Endothelial cell of umbilical vein (primary cell): ENCODE measurements at regions of chr5 and their contacts with region 1.

Region 1: DNA sequence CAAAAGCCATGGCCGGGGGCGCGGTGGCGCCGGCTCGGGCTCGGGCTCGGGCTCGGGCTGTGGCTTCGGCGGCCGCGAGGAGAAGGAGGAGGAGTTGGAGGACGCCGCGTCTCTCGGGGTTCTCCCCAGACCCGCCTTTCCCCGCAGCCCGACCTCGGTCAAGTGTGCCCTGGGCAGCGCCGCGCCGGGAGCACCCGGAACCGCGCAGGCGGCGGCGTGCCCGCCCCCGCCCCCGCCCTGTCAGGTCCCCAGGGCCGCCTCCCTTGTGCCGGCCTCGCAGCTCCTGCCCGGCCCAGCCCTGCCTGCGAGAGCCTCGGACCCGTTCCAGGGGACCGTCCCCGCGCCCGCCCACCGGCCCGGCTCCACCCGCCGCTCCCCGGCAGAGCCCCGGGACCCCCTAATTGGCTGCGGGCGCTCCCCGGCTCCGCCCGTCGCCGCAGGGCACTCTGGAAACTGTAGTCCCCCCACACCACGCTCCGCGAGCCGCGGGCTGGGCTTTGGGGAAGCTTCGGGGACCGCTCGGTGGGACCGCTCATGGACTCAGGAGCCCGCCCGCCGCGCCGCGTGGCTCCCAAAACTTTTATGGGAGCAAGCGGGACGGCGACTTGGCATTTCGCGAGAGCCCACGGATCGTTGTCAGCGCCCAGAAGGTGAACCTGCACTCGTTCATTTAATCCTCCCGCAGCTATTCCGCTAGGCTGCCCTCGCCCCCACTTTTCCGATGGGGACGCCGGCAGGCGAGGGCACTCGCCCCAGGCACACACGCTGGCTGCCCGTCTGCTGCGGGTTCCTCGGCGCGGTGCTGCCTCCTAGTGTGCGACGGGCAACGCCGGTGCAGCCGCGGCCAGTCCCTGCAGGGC is at the start of gene STK10:
- DNase-seq: peak; percentile 91
- H3K4me3 ChIP-seq: peak within 1 kb of the TSS; percentile 69 to 89 (median 74)
- H3K27ac ChIP-seq: peak within 1 kb of the TSS; percentile 74
- H3K4me1 ChIP-seq: peaks cover 16% of the 10 kb centered on the region
- H3K27me3 ChIP-seq: peaks cover 0 to 2% of the 10 kb centered on the region in 2 experiments
- CTCF ChIP-seq: peak; percentile 95 to 96
- POLR2A ChIP-seq: peak; percentile 52
- total RNA-seq, gene STK10: 47.2 and 57.9 TPM in 2 replicates

Region 2: GRCh38 chr5:171580502-171581265 is 607.6 kb before region 1 on chr5:
- CTCF ChIA-PET with region 1: no interaction called
- POLR2A ChIA-PET with region 1: no interaction called
- dilution Hi-C with region 1: no loop called
- intact Hi-C with region 1: no loop called
- DNase-seq: no peak
- H3K4me3 ChIP-seq: no peak overlapping the region
- H3K27ac ChIP-seq: no peak overlapping the region
- H3K4me1 ChIP-seq: no peaks in the 10 kb centered on the region
- H3K27me3 ChIP-seq: peaks cover 3 to 5% of the 10 kb centered on the region in 2 experiments
- CTCF ChIP-seq: no peak
- POLR2A ChIP-seq: no peak

Region 3: GRCh38 chr5:171614971-171615653 is 573.2 kb before region 1 on chr5:
- CTCF ChIA-PET with region 1: no interaction called
- POLR2A ChIA-PET with region 1: no interaction called
- dilution Hi-C with region 1: no loop called
- intact Hi-C with region 1: no loop called
- DNase-seq: no peak
- H3K4me3 ChIP-seq: no peak overlapping the region
- H3K27ac ChIP-seq: no peak overlapping the region
- H3K4me1 ChIP-seq: no peaks in the 10 kb centered on the region
- H3K27me3 ChIP-seq: peaks cover 2 to 7% of the 10 kb centered on the region in 2 experiments
- CTCF ChIP-seq: no peak
- POLR2A ChIP-seq: no peak

Region 4: GRCh38 chr5:171907725-171908343 is 280.4 kb before region 1 on chr5:
- CTCF ChIA-PET with region 1: interaction called, 50 read pairs
- POLR2A ChIA-PET with region 1: no interaction called
- dilution Hi-C with region 1: no loop called
- intact Hi-C with region 1: loop called (anchors 1 kb)
- DNase-seq: peak; percentile 65
- H3K4me3 ChIP-seq: no peak overlapping the region
- H3K27ac ChIP-seq: no peak overlapping the region
- H3K4me1 ChIP-seq: no peaks in the 10 kb centered on the region
- H3K27me3 ChIP-seq: no peaks in the 10 kb centered on the region
- CTCF ChIP-seq: peak; percentile 52 to 58
- POLR2A ChIP-seq: no peak

Region 5: GRCh38 chr5:172052450-172053236 is 135.6 kb before region 1 on chr5:
- CTCF ChIA-PET with region 1: interaction called, 6 read pairs
- POLR2A ChIA-PET with region 1: no interaction called
- dilution Hi-C with region 1: no loop called
- intact Hi-C with region 1: loop called (anchors 2 kb)
- DNase-seq: peak; percentile 46
- H3K4me3 ChIP-seq: no peak overlapping the region
- H3K27ac ChIP-seq: no peak overlapping the region
- H3K4me1 ChIP-seq: peaks cover 16% of the 10 kb centered on the region
- H3K27me3 ChIP-seq: no peaks in the 10 kb centered on the region
- CTCF ChIP-seq: no peak
- POLR2A ChIP-seq: no peak

Region 6: GRCh38 chr5:172114875-172115422 is 73.3 kb before region 1 on chr5:
- CTCF ChIA-PET with region 1: interaction called, 19 read pairs
- POLR2A ChIA-PET with region 1: no interaction called
- dilution Hi-C with region 1: no loop called
- intact Hi-C with region 1: no loop called
- DNase-seq: no peak
- H3K4me3 ChIP-seq: no peak overlapping the region
- H3K27ac ChIP-seq: no peak overlapping the region
- H3K4me1 ChIP-seq: peaks cover 16% of the 10 kb centered on the region
- H3K27me3 ChIP-seq: no peaks in the 10 kb centered on the region
- CTCF ChIP-seq: no peak
- POLR2A ChIP-seq: no peak

Region 7: DNA sequence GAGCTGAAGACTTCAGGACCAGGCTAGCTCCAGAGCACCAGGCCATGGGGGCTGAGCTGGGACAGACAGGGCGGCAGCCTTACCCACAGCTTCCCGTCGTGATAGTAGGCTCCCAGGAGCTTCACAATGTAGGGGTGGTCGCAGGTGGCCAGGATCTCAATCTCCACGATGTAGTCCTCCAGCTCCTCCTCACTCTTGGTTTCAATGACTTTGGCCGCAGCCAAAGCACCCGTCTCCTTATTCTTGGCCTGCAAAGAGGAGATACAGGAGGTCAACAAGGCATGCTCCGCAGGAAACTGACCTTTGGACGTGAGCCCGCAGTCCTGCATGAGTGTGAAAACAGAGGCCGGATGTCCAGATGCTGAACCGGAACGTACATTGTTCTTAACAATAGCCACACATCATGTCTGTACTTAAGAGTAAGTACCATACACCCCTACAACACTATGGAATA is 31.7 kb before region 1 on chr5:
- CTCF ChIA-PET with region 1: interaction called, 30 read pairs
- POLR2A ChIA-PET with region 1: interaction called, 7 read pairs
- dilution Hi-C with region 1: no loop called
- intact Hi-C with region 1: loop called (anchors 1 kb)
- DNase-seq: peak; percentile 98
- H3K4me3 ChIP-seq: no peak overlapping the region
- H3K27ac ChIP-seq: peak overlapping the region; percentile 75
- H3K4me1 ChIP-seq: peaks cover 15% of the 10 kb centered on the region
- H3K27me3 ChIP-seq: no peaks in the 10 kb centered on the region
- CTCF ChIP-seq: no peak
- POLR2A ChIP-seq: peak; percentile 25

Region 8: DNA sequence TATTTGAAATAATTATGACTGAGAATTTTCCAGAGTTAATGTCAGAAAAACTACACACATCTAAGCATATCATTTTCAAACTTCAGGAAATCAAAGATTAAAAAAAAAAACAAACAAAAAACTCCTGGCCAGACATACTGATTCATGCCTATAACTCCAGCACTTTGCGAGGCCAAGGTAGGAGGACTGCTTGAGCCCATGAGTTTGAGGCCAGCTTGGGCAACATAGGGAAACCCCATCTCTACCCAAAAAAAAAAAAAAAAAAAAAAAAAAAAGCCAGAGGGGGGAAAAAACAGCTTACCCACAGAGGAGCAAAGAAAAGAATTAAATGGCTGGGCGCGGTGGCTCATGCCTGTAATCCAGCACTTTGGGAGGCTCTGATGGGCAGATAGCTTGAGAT is 28.1 kb after region 1 on chr5:
- CTCF ChIA-PET with region 1: no interaction called
- POLR2A ChIA-PET with region 1: interaction called, 11 read pairs
- dilution Hi-C with region 1: no loop called
- intact Hi-C with region 1: no loop called
- DNase-seq: no peak
- H3K4me3 ChIP-seq: no peak overlapping the region
- H3K27ac ChIP-seq: no peak overlapping the region
- H3K4me1 ChIP-seq: no peaks in the 10 kb centered on the region
- H3K27me3 ChIP-seq: no peaks in the 10 kb centered on the region
- CTCF ChIP-seq: no peak
- POLR2A ChIP-seq: no peak

Region 9: DNA sequence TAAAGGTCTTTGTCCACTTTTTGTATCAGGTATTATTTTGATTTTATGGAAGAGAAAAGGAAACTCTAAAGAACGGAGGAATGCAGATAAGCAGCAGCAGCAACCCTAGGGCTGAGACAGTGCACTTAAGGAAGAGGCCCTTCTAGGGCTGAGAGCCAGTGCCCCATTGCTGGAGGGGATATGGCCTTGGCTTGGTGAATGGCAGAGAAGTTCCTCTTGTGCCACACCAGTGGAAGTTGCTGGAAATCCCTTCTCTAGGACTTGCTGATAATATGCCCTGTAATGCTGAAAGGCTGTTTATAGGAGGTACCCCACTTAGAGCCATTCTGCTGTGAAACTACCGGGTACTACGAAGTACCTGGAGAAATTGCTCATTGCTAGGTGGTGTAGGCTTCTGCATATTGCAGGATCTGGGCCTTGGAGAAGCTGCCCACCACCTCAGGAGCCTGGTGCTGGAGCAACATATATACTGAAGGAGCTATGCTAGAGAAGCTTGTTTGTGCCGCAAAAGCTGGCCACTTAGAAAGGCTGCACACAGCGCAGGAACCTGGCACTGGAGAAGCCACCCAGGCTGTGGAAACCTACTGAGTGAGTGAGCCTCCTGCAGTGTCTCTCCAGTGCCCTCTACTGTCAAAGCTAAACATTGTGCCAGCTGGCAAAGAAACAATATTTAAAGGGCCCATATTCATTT is 104.9 kb after region 1 on chr5:
- CTCF ChIA-PET with region 1: interaction called, 18 read pairs
- POLR2A ChIA-PET with region 1: no interaction called
- dilution Hi-C with region 1: no loop called
- intact Hi-C with region 1: loop called (anchors 1 kb)
- DNase-seq: peak; percentile 63
- H3K4me3 ChIP-seq: no peak overlapping the region
- H3K27ac ChIP-seq: no peak overlapping the region
- H3K4me1 ChIP-seq: no peaks in the 10 kb centered on the region
- H3K27me3 ChIP-seq: peaks cover 2 to 7% of the 10 kb centered on the region in 2 experiments
- CTCF ChIP-seq: peak; percentile 81 to 87
- POLR2A ChIP-seq: no peak

Region 10: DNA sequence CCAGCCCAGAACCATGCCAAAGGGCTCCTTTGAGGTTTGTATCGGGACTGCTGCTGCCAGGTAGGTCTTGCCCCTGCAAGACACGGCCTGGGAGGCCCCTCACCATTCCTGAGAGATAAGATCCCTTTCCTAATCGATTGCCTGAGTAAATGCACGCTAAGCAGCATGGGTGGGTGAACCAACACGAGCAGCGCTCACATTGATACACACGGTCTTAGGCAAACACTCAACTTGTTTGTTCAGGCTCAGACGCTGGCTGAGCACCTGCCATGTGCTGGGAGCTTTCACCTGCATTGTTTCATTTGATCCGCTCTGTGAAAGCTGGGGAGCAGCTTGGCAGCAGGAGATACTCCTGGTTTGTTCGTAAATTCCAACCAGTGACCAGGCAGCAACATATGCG is 375.9 kb after region 1 on chr5:
- CTCF ChIA-PET with region 1: no interaction called
- POLR2A ChIA-PET with region 1: no interaction called
- dilution Hi-C with region 1: no loop called
- intact Hi-C with region 1: no loop called
- DNase-seq: no peak
- H3K4me3 ChIP-seq: no peak overlapping the region
- H3K27ac ChIP-seq: no peak overlapping the region
- H3K4me1 ChIP-seq: no peaks in the 10 kb centered on the region
- H3K27me3 ChIP-seq: peaks cover 0 to 3% of the 10 kb centered on the region in 2 experiments
- CTCF ChIP-seq: no peak
- POLR2A ChIP-seq: no peak